IMR-90 (cell line): ENCODE measurements at regions of chr11 and their contacts with region 1.

Region 1: GRCh38 chr11:110472858-110473257 is 43.1 kb downstream of the FDX1 start:
- DNase-seq: peak; percentile 34
- ATAC-seq: no peak
- H3K4me3 ChIP-seq: no peak overlapping the region
- H3K27ac ChIP-seq: no peak overlapping the region
- H3K4me1 ChIP-seq: peaks cover 14% of the 10 kb centered on the region
- H3K27me3 ChIP-seq: no peaks in the 10 kb centered on the region
- CTCF ChIP-seq: no peak
- POLR2A ChIP-seq: no peak
- RAD21 ChIP-seq: no peak

Region 2: GRCh38 chr11:110522456-110522855 is 49.6 kb after region 1 on chr11:
- CTCF ChIA-PET with region 1: no interaction called
- POLR2A ChIA-PET with region 1: no interaction called
- dilution Hi-C with region 1: no loop called
- in situ Hi-C with region 1: no loop called
- intact Hi-C with region 1: no loop called
- DNase-seq: no peak
- ATAC-seq: no peak
- H3K4me3 ChIP-seq: no peak overlapping the region
- H3K27ac ChIP-seq: no peak overlapping the region
- H3K4me1 ChIP-seq: peaks cover 14% of the 10 kb centered on the region
- H3K27me3 ChIP-seq: no peaks in the 10 kb centered on the region
- CTCF ChIP-seq: no peak
- POLR2A ChIP-seq: no peak
- RAD21 ChIP-seq: no peak

Region 3: DNA sequence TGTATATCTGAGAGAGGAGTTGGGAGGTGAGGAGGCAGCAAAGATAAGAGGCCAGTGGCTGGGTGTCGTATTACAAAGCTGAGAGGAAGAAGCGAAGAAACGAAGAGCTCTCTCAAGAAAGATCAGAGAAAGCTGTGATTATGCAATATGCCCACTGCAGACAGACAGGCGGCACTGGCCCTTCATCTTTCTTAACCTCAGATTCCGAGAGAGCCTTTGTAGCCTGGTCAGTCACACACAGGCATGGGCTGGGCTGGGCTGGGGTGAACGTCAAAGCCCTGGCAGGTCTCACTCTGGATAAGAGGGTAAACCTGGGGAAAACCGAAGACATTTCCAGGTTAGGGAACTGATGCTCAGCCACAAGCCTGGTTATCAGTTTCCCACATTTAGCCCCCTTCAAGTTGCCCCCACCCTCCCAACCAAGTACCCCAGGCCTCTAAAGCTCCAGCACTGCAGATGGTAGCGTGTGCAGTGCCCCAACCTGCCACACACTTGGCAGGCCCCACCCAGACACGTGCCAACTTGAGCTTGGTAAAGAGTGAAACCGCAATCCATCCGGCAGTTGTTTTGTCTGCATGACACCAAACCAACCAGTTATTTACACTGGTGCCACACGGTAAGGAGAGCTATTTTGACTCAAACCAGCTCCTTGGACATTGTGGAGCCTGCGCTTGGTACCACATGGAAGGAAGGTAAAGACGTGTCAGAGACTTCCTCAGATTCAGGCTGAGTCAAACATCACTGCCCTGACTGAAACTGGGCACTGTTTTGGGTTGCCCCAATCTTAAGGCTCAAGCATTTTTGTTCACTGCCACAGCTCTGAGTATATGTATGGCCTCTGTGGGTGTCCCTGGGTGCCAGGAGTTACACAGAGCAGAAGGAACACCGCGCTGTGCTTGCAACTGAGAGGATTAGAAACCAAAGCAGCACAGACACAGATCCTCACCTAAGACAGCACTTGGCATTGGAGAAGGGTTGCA is 92.8 kb after region 1 on chr11:
- CTCF ChIA-PET with region 1: no interaction called
- POLR2A ChIA-PET with region 1: no interaction called
- dilution Hi-C with region 1: no loop called
- in situ Hi-C with region 1: no loop called
- intact Hi-C with region 1: loop called (anchors 5 kb)
- DNase-seq: peak; percentile 64
- ATAC-seq: peak; percentile 83
- H3K4me3 ChIP-seq: no peak overlapping the region
- H3K27ac ChIP-seq: no peak overlapping the region
- H3K4me1 ChIP-seq: peaks cover 8% of the 10 kb centered on the region; the same call in 1 of the 2 replicates
- H3K27me3 ChIP-seq: peaks cover 8% of the 10 kb centered on the region
- CTCF ChIP-seq: no peak
- POLR2A ChIP-seq: no peak
- RAD21 ChIP-seq: no peak